ENCODE measurements at regions of chr16 and their contacts with region 1.

Region 1: DNA sequence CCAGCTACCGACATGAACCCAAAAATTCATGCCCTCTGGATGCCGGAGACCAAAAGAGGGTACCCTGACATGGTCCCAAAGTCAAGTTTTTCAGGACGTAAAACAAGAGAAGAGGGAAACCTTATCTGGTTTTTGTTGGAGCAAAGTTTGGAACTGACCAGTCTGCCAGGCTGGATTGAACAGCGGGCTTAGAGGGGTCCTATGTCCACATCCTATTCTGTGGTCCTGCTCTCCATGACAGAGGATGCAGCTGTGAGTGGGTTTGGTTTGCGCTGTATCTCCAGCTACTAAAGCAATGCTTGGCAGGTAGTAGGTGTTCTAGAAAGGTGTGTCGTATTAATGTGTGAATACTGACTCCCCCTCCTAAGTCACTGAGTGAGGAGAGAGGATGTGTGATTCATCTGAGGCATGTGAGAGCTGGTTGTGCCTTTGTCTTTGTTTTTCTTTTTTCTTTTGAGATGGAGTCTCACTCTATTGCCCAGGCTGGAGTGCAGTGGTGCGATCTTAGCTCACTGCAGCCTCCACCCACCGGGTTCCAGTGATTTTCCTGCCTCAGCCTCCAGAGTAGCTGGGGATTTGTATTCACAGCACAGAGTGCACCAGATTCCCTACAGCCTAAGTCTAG is 31.0 kb downstream of the PMM2 start:
- DNase-seq: no peak
- H3K4me3 ChIP-seq: no peak overlapping the region
- H3K27ac ChIP-seq: no peak overlapping the region
- H3K4me1 ChIP-seq: no peaks in the 10 kb centered on the region
- H3K27me3 ChIP-seq: no peaks in the 10 kb centered on the region
- CTCF ChIP-seq: no peak
- EP300 ChIP-seq: no peak
- POLR2A ChIP-seq: no peak

Region 2: DNA sequence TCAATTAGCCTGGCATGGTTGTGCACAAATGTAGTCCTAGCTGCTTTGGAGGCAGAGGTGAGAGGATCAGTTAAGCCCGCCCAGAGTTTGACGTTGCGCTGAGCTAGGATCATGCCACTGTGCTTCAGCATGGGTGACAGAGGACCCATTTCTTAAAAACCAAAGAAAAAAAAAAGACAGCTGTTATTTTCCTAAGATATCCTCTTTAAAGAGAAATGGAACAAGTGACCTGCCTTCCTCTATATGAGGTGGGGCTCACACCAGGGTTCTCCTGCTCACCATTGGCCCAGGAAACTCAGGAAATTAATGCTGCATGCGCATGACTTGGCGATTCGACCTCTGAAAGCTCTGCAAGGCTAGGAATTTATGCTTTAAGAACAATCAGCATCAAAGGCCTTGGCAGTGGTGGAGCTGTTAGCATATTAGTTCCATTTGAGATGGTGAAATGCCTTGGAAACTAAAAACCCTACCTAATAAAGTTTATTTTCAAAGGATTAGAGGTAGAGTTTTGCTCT is 1387.7 kb before region 1 on chr16:
- intact Hi-C with region 1: loop called in 1 of 4 experiments (anchors 5 kb)
- DNase-seq: no peak
- H3K4me3 ChIP-seq: no peak overlapping the region
- H3K27ac ChIP-seq: no peak overlapping the region
- H3K4me1 ChIP-seq: no peaks in the 10 kb centered on the region
- H3K27me3 ChIP-seq: no peaks in the 10 kb centered on the region
- CTCF ChIP-seq: no peak
- EP300 ChIP-seq: no peak
- POLR2A ChIP-seq: no peak

Measured in ovary (tissue), 10 donors.